ENCODE measurements at regions of chr1 and their contacts with region 1.

Region 1: GRCh38 chr1:234617131-234617985 is 7.4 kb upstream of the IRF2BP2 start:
- DNase-seq: no peak
- ATAC-seq: no peak
- H3K4me3 ChIP-seq: no peak overlapping the region
- H3K27ac ChIP-seq: peak overlapping the region in 6 of 10 donors; percentile 39 to 79 (median 44)
- H3K4me1 ChIP-seq: peaks cover 11 to 84% (median 49%) of the 10 kb centered on the region in 9 donors
- H3K27me3 ChIP-seq: no peaks in the 10 kb centered on the region
- CTCF ChIP-seq: peak in 2 of 9 donors; percentile 10 to 21

Region 2: GRCh38 chr1:234515821-234516241 is 101.5 kb before region 1 on chr1:
- intact Hi-C with region 1: no loop called
- DNase-seq: no peak
- ATAC-seq: peak in 1 of 8 donors; percentile 19
- H3K4me3 ChIP-seq: no peak overlapping the region
- H3K27ac ChIP-seq: peak overlapping the region in 9 of 10 donors; percentile 2 to 70 (median 31)
- H3K4me1 ChIP-seq: peaks cover 5 to 66% (median 34%) of the 10 kb centered on the region in 9 donors
- H3K27me3 ChIP-seq: no peaks in the 10 kb centered on the region
- CTCF ChIP-seq: no peak

Region 3: GRCh38 chr1:234676103-234676594 is 58.8 kb after region 1 on chr1:
- intact Hi-C with region 1: loop called in 1 of 10 experiments (anchors 10 kb)
- DNase-seq: peak; percentile 80 to 91
- ATAC-seq: peak; percentile 92 to 98 (median 97)
- H3K4me3 ChIP-seq: peak overlapping the region; percentile 6 to 54 (median 48)
- H3K27ac ChIP-seq: peak overlapping the region in 9 of 10 donors; percentile 1 to 80 (median 62)
- H3K4me1 ChIP-seq: peaks cover 0 to 11% (median 5%) of the 10 kb centered on the region in 9 donors
- H3K27me3 ChIP-seq: no peaks in the 10 kb centered on the region
- CTCF ChIP-seq: no peak

Region 4: DNA sequence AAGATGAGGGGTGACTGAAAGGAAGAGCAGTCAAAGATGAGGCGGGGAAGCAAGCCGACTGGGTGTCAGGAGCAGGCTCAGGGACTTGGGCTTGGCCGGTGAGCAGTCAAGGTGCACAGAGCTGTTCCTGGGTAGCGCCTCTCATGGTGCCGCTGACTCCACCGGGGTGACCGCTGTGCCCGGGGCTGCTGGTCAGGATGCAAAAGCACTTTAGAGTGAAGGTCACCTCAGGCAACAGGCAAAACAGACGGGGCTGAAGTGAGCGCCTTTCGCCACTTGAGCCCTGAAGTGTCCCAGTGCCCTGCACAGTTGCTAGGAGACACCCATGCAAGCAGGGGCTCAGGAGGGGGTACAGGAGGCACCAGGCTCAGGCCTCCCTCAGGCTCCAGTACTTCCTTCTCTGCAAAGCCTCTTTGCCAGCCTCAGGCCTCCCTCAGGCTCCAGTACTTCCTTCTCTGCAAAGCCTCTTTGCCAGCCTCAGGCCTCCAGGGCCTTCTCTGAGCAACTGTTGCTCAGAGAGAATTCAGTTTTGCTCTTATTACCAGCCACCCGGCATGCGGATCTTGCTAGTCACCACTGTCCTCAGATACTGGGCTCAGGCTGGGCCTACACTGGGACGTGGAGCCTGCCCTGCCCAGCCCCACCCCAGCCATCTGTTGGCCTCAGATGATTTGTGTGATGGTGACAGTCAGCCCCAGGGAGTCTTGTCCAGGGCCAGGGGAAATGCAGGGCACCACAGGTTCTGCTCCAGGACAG is 92.3 kb after region 1 on chr1:
- intact Hi-C with region 1: loop called in 1 of 10 experiments (anchors 5 kb)
- DNase-seq: peak in 1 of 2 donors; percentile 65
- ATAC-seq: peak; percentile 72 to 93 (median 83)
- H3K4me3 ChIP-seq: no peak overlapping the region
- H3K27ac ChIP-seq: peak overlapping the region; percentile 42 to 82 (median 56)
- H3K4me1 ChIP-seq: peaks cover 0 to 23% (median 11%) of the 10 kb centered on the region in 9 donors
- H3K27me3 ChIP-seq: no peaks in the 10 kb centered on the region
- CTCF ChIP-seq: no peak

Region 5: DNA sequence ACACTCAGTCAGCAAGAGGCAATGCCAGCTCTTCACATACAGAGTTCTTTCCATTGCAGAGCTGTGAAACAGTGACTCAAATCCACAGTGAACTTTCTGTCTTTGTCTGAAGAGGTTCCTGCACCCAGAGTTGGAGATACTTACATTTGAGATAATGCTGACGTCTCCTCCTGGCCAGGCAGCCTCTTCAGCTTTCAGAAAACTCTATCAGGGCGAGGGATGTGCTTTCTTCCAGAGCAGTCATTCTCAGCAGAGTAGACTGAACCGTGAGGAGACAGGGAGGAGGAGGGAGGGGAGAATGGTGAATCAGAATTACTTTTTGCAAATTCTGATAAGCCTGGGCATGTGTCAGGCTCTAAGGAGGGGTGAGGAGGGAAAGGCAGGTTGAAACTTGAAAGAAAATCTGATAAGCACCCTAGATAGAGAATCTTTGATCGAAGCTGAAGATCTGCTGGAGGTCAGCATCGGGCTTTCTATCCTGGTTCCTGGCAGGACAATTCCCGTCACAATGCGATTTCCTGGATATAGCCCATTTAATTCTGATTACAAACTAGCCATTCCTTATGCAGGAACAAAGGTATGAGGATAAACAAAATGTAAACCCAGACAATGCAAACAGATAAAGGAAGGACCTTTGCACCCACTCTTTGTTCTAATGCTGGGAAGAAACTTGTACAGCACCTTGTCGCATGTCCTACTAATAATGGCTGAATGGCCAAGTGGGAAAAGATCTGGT is 1466.5 kb after region 1 on chr1:
- intact Hi-C with region 1: no loop called
- DNase-seq: no peak
- ATAC-seq: peak in 3 of 8 donors; percentile 28 to 56 (median 30)
- H3K4me3 ChIP-seq: no peak overlapping the region
- H3K27ac ChIP-seq: no peak overlapping the region
- H3K4me1 ChIP-seq: peaks cover 0 to 9% (median 0%) of the 10 kb centered on the region in 9 donors
- H3K27me3 ChIP-seq: no peaks in the 10 kb centered on the region
- CTCF ChIP-seq: no peak

Measured in heart right ventricle (tissue), 16 donors.